ENCODE measurements at regions of chr13 and their contacts with region 1.

Region 1: DNA sequence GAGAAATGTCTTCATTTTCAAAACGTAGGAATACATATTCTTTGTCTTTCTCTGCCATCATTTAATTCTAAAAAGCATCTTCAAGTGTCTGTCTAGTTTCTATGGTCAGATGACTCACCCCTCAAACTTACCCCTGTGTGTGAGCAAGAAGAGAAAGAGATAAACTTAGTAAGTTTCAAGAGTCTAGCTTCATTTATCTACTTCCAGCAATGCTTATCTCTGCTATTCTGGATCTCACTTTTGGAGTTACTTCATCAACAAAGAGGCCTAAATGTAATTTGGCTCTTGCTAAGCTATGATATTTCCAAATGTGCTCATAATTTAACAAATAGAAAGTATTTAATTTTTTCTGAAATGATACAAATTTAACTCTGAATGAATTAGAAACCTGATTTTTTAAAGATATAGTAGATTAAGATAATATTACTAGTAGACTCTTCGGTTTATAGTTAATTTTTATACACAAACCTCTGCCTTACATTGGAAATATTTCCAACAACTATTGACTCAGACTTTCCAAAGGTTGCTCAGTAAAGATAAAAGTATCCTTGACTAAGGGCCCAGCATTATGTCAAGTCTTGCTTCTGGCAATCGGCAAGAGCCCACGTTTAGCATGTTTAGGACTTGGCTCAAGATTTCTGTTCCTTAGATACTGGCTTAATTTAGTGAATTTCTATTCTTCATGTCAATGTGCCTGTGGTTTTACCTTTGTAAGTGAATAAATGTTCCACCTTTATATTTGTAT is 1511.0 kb upstream of the SLC10A2 start:
- DNase-seq: no peak
- H3K4me3 ChIP-seq: no peak overlapping the region
- H3K27ac ChIP-seq: peak overlapping the region in 1 of 5 donors; percentile 0
- H3K4me1 ChIP-seq: no peaks in the 10 kb centered on the region
- H3K27me3 ChIP-seq: no peaks in the 10 kb centered on the region
- CTCF ChIP-seq: no peak
- POLR2A ChIP-seq: no peak

Region 2: DNA sequence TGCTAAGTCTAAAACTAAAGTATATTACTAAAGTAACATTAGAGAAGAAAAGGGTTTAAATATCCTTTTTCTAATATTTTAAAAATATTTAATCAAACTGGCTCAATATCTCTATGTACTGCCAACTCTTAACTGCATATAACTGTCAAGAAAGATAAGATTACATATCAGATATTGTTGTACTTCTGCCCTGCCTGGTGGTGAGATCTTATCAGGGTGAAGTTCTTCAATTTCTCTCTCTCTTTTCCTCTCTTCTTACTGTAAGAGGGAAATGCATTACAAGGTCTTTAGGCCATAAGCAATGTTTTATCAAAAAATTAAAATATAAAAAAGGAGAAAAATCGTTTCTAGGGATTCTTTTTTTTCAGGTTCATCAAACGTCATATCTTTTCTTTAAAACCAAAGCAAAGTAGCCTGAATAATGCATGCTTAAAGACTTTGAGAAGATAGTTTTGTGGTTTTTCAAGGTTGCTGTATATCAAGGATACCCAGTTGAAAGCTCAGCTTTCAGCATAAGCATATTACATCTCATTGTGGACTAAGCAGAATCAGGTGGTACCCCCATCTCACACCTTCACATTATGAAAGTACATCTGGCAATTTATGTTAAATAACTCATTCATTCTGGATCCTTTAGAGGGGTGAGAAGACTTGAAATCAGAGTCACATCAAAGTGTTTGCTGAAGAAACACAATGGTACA is 114.7 kb after region 1 on chr13:
- intact Hi-C with region 1: no loop called
- DNase-seq: no peak
- H3K4me3 ChIP-seq: no peak overlapping the region
- H3K27ac ChIP-seq: no peak overlapping the region
- H3K4me1 ChIP-seq: no peaks in the 10 kb centered on the region
- H3K27me3 ChIP-seq: no peaks in the 10 kb centered on the region
- CTCF ChIP-seq: no peak
- POLR2A ChIP-seq: no peak

Region 3: DNA sequence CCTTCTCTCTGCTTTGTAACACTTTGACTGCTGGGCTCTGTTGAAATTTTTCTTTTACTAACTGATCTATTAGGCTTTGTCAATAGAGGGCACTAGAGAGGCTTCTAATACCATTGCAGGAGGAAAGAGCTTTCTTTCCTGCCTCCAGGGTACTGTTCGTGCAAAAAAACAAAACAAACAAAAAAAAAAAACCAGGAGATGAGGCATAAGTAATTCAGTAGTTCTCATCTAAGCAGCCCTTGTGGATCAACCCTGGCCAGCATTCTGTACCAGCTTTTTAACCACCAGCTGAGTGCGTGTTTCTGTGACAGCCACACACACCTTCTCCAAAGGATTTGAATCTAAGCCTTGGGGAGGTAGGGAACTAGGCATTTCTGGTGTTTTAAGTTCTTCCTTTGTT is 196.5 kb after region 1 on chr13:
- intact Hi-C with region 1: no loop called
- DNase-seq: no peak
- H3K4me3 ChIP-seq: no peak overlapping the region
- H3K27ac ChIP-seq: no peak overlapping the region
- H3K4me1 ChIP-seq: no peaks in the 10 kb centered on the region
- H3K27me3 ChIP-seq: no peaks in the 10 kb centered on the region
- CTCF ChIP-seq: peak; percentile 34 to 65 (median 48)
- POLR2A ChIP-seq: no peak

Region 4: GRCh38 chr13:105202354-105202753 is 625.1 kb after region 1 on chr13:
- intact Hi-C with region 1: loop called in 1 of 2 experiments (anchors 5 kb)
- DNase-seq: peak in 2 of 7 donors; percentile 13 to 15
- H3K4me3 ChIP-seq: no peak overlapping the region
- H3K27ac ChIP-seq: no peak overlapping the region
- H3K4me1 ChIP-seq: no peaks in the 10 kb centered on the region
- H3K27me3 ChIP-seq: no peaks in the 10 kb centered on the region
- CTCF ChIP-seq: peak; percentile 45 to 63 (median 54)
- POLR2A ChIP-seq: no peak

Measured in adrenal gland (tissue), 19 donors.